GM23248 (cell line): ENCODE measurements at regions of chr6 and their contacts with region 1.

Region 1: DNA sequence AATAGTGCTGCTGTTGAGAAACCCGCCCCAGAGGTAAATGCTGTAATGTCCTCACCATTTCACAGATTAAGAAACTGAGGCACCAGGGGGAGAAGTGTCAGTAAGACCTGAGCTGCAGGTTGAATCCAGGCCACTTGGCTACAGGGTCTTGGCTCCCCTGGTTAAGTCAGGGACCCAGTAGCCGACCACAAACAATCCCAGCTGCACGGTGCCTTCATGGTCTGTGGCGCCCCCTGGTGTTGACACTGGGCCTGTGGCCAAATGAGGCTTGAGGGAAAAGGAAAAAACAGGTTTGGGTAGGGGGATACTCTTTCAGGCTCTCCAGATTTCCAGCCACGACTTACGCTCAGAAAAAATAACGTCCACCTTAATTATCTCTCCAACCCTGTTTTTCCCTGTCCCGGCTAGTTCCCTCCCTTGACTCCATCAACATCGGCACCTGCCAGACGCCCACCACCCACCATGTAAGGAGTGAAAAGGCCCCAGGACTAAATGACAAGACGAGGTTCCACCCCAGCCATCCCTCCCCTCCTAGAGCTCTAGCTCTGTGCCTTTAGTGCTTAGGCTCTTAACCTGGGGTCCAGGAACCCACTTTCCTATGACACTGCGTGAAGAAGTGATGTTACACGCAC is 47.7 kb upstream of the POLR1H start:
- DNase-seq: peak; percentile 37
- H3K4me3 ChIP-seq: no peak overlapping the region
- H3K27ac ChIP-seq: no peak overlapping the region
- H3K4me1 ChIP-seq: no peaks in the 10 kb centered on the region
- H3K27me3 ChIP-seq: no peaks in the 10 kb centered on the region

Region 2: GRCh38 chr6:29748391-29749307 is 264.8 kb before region 1 on chr6:
- in situ Hi-C with region 1: loop called (anchors 25 kb)
- DNase-seq: peak; percentile 94
- H3K4me3 ChIP-seq: peak overlapping the region; percentile 85
- H3K27ac ChIP-seq: no peak overlapping the region
- H3K4me1 ChIP-seq: peaks cover 6% of the 10 kb centered on the region; the same call in 1 of the 2 replicates
- H3K27me3 ChIP-seq: no peaks in the 10 kb centered on the region

Region 3: GRCh38 chr6:29777310-29777709 is 236.1 kb before region 1 on chr6:
- in situ Hi-C with region 1: no loop called
- DNase-seq: no peak
- H3K4me3 ChIP-seq: no peak overlapping the region
- H3K27ac ChIP-seq: no peak overlapping the region
- H3K4me1 ChIP-seq: no peaks in the 10 kb centered on the region
- H3K27me3 ChIP-seq: peaks cover 13% of the 10 kb centered on the region

Region 4: DNA sequence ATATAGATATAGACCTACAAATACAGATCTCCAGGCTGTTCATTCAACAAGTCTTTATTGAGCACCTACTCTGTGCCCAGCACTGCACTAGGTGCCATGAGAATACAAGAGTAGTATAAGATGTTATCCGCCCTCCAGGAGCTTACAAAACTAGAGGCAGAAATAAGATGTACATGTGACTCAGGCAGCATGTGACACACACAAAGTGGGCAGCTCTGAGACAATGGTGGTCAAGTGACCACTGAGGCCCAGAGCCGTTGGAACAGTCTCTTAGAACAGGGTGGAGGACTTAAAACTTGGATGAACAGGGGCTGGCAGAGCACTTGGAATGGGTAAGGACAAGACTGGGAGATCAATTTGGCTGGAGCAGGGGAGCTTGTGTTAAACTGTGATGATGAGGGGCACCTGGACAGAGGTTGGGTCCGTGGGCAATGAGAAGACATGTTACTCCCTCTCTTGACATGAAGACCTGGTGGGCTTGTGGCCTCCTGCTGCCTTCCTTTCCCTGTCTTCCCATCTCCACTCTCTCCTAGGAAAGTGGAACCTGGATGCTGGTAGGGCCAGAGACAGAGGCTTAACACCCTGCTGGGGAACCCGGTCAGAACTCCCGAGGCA is 171.1 kb after region 1 on chr6:
- in situ Hi-C with region 1: no loop called
- DNase-seq: no peak
- H3K4me3 ChIP-seq: no peak overlapping the region
- H3K27ac ChIP-seq: no peak overlapping the region
- H3K4me1 ChIP-seq: no peaks in the 10 kb centered on the region
- H3K27me3 ChIP-seq: no peaks in the 10 kb centered on the region

Region 5: GRCh38 chr6:30508890-30509736 is 495.7 kb after region 1 on chr6:
- in situ Hi-C with region 1: no loop called
- DNase-seq: peak; percentile 48
- H3K4me3 ChIP-seq: no peak overlapping the region
- H3K27ac ChIP-seq: no peak overlapping the region
- H3K4me1 ChIP-seq: peaks cover 6% of the 10 kb centered on the region; the same call in 1 of the 2 replicates
- H3K27me3 ChIP-seq: no peaks in the 10 kb centered on the region

Region 6: GRCh38 chr6:30759575-30760239 is 746.3 kb after region 1 on chr6:
- in situ Hi-C with region 1: no loop called
- DNase-seq: peak; percentile 96
- H3K4me3 ChIP-seq: 0 out of 2 replicates have a peak overlapping the region, but pooled peaks have one; percentile 19
- H3K27ac ChIP-seq: peak overlapping the region; percentile 91
- H3K4me1 ChIP-seq: peaks cover 59% of the 10 kb centered on the region
- H3K27me3 ChIP-seq: no peaks in the 10 kb centered on the region